ENCODE measurements at regions of chr4 and their contacts with region 1.

Region 1: GRCh38 chr4:140252742-140253555 is 99.0 kb upstream of the MAML3 start:
- DNase-seq: peak; percentile 38
- H3K4me3 Mint-ChIP-seq: peak overlapping the region; percentile 68
- H3K27ac Mint-ChIP-seq: peak overlapping the region; percentile 68
- H3K4me1 Mint-ChIP-seq: peaks cover 33% of the 10 kb centered on the region
- H3K27me3 Mint-ChIP-seq: peaks cover 8% of the 10 kb centered on the region

Region 2: DNA sequence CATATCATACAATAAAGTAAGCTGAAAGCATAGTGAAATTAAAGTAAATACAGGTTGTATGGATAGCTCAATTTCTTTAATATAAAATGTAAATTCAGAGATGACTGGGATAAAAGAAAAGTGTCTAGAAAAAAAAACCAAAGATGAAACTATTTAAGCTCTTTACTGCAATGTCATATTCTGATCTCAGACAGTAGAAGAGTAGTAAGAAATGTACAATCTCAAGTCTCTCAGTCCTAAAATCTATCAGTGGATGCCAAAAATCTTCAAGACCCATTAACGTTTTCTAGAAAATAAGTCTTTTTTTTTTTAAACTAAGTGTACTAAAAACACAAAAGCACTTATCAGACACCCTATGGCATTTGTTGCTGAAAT is 986.8 kb before region 1 on chr4:
- CTCF ChIA-PET with region 1: no interaction called
- POLR2A ChIA-PET with region 1: interaction called, 11 read pairs
- DNase-seq: no peak
- H3K4me3 Mint-ChIP-seq: peak overlapping the region; percentile 68
- H3K27ac Mint-ChIP-seq: peak overlapping the region; percentile 69
- H3K4me1 Mint-ChIP-seq: peaks cover 23% of the 10 kb centered on the region
- H3K27me3 Mint-ChIP-seq: peaks cover 13% of the 10 kb centered on the region

Region 3: GRCh38 chr4:140012688-140013486 is 240.1 kb before region 1 on chr4:
- CTCF ChIA-PET with region 1: interaction called, 13 read pairs
- POLR2A ChIA-PET with region 1: no interaction called
- DNase-seq: peak; percentile 69
- H3K4me3 Mint-ChIP-seq: no peak overlapping the region
- H3K27ac Mint-ChIP-seq: no peak overlapping the region
- H3K4me1 Mint-ChIP-seq: peaks cover 8% of the 10 kb centered on the region
- H3K27me3 Mint-ChIP-seq: peaks cover 10% of the 10 kb centered on the region

Region 4: DNA sequence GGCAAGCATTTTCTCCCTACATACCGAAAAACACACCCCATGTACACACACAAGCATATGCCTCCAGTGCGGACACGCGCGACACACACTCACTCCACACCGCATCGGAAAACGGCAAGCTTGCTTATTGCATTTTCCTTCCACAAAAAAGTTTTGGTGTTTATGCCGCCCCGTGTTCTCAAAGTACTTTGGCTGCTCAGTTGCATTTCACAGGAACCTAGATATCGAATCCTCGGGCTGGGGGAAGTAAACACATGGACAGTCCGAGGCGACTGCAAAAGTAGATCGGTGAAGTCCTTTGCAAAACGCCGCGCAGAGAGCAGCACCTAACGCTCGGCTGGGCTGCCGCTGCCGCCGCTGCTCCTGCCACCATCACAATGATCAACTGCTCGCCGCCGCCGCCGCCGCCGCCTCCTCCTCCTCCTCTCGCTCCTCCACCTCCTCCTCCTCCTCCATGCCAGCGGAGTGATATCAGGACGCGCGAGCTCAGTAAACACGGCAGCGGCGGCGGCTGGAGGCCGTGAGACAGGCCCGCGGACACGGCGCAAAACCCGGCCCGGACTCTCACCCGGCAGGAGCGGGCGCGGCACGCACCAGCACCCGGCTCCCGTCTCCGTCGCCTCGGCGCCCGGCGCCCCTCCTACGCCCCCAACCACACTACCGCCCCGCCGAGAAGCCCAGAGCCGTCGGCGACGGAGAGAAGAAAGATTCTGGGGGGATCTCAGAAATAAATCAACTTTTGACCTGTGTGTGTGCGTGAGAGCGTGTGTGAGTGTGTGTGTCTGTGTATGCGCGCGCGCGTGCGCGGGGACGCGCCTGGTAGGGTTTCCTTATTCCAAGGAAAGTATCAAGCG is 99.0 kb before region 1 on chr4 and contains the start of gene MAML3:
- CTCF ChIA-PET with region 1: interaction called, 11 read pairs
- POLR2A ChIA-PET with region 1: no interaction called
- DNase-seq: peak; percentile 86
- H3K4me3 Mint-ChIP-seq: peak within 1 kb of the TSS; percentile 95
- H3K27ac Mint-ChIP-seq: peak within 1 kb of the TSS; percentile 83
- H3K4me1 Mint-ChIP-seq: peaks cover 59% of the 10 kb centered on the region
- H3K27me3 Mint-ChIP-seq: peaks cover 40% of the 10 kb centered on the region
- total RNA-seq, gene MAML3: 2.0 to 2.2 TPM

Region 5: GRCh38 chr4:140233791-140234696 is 18.9 kb before region 1 on chr4:
- CTCF ChIA-PET with region 1: interaction called, 23 read pairs
- POLR2A ChIA-PET with region 1: no interaction called
- DNase-seq: no peak
- H3K4me3 Mint-ChIP-seq: peak overlapping the region; percentile 8
- H3K27ac Mint-ChIP-seq: peak overlapping the region; percentile 88
- H3K4me1 Mint-ChIP-seq: peaks cover 49% of the 10 kb centered on the region
- H3K27me3 Mint-ChIP-seq: peaks cover 4% of the 10 kb centered on the region

Measured in activated CD4-positive, alpha-beta T cell treated with anti-CD3 and anti-CD28 coated beads, Interleukin-2, amount 10 ng/mL, durations not matched to agents 7 days and 5 days (primary cell).